AG04450 (cell line): ENCODE measurements at regions of chr16 and their contacts with region 1.

Region 1: GRCh38 chr16:87387942-87388817 is 4.0 kb upstream of the MAP1LC3B start:
- DNase-seq: peak; percentile 96
- H3K4me3 ChIP-seq: no peak overlapping the region
- H3K27ac ChIP-seq: peak overlapping the region; percentile 94
- H3K27me3 ChIP-seq: no peaks in the 10 kb centered on the region
- CTCF ChIP-seq: no peak

Region 2: GRCh38 chr16:86984991-86985647 is 403.1 kb before region 1 on chr16:
- CTCF ChIA-PET with region 1: interaction called, 11 read pairs
- POLR2A ChIA-PET with region 1: no interaction called
- DNase-seq: no peak
- H3K4me3 ChIP-seq: no peak overlapping the region
- H3K27ac ChIP-seq: no peak overlapping the region
- H3K27me3 ChIP-seq: no peaks in the 10 kb centered on the region
- CTCF ChIP-seq: no peak

Region 3: DNA sequence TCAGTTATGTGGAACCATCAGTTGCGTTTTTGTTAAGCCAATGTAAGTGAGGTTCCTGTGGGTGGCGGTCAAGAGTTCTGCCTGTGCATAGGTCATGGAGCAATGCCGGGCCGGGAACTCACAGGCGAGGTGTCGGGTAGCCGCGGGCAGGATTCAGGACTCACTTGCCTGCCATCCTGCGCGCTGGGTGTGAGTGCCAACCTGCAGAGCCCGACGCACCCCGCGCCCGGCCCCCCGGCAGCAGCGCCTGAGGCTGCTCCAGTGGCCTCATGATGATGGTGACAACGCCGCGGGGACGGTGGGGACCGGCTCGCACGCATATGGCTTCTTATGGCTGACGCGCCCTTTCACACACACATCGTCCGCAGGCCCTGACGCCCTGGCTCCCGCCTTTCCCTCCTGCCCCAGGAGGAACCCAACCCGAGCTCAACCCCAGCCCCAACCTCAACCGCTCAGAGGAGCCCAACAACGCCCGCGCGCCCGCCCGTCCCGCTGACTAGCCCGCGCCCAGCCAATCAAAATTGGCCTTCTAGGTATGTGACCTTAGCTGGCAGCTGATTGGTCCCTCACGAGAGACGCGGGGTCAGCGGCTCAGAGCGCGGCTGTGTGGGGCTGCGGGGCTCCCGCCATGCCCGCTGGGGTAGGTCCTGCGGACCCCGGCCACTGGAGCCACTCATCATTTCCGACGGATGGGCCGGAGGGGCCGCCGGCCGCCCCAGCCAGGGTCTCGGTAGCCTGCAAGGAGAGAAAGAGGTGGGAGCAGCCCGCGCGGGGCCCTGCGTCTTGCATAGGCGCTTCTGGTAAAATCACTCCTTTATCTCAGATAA is 71.0 kb before region 1 on chr16 and contains the start of gene C16orf95:
- CTCF ChIA-PET with region 1: no interaction called
- POLR2A ChIA-PET with region 1: interaction called, 20 read pairs
- DNase-seq: peak; percentile 83
- H3K4me3 ChIP-seq: peak within 1 kb of the TSS; percentile 93
- H3K27ac ChIP-seq: peak within 1 kb of the TSS; percentile 80
- H3K27me3 ChIP-seq: no peaks in the 10 kb centered on the region
- CTCF ChIP-seq: peak; percentile 63
- polyA plus RNA-seq, gene C16orf95: 2.0 and 2.3 TPM in 2 replicates

Region 4: DNA sequence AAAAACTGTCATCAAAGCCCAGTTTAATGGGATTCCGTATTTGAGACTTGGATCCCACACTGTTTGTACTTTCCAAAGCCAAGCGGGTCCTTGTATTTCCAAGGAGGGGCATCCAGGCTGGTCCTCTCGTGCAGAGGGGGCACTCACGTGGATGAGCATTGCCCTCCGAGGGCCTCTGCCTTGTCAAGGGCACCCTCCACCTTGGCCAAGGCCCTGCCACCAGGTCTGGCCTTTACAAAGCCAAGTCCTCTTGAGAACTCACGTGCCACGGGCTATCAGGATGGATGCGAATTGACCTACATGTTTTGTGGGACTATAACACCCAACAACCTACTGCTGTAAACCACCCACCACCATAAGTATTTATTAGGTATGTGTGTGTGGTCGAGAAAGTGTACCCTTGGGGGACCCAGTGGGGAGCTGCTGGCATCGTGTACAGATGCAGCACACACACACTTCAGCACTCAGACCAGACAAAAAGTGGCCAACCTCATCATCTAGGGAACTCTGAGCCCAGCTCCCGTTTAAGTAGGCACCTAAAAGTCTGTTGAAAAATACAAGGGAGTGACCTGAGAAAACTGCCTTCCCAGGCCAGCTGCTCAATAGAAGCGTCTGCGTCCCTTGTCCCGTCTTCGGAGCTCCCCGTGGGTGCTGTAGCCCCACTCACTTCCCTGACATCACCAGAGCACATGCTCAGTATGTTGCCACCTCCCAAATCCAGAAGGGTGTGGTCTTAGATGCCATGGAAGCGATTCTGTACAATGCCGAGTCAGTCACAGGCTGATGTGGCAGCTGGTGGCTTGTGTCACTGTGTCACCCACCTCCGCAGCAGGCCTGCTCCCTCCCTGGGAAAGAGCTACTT is 16.8 kb after region 1 on chr16:
- CTCF ChIA-PET with region 1: no interaction called
- POLR2A ChIA-PET with region 1: no interaction called
- DNase-seq: no peak
- H3K4me3 ChIP-seq: no peak overlapping the region
- H3K27ac ChIP-seq: no peak overlapping the region
- H3K27me3 ChIP-seq: no peaks in the 10 kb centered on the region
- CTCF ChIP-seq: no peak